Esophagus squamous epithelium (tissue), 5 donors: ENCODE measurements at regions of chr16 and their contacts with region 1.

Region 1: DNA sequence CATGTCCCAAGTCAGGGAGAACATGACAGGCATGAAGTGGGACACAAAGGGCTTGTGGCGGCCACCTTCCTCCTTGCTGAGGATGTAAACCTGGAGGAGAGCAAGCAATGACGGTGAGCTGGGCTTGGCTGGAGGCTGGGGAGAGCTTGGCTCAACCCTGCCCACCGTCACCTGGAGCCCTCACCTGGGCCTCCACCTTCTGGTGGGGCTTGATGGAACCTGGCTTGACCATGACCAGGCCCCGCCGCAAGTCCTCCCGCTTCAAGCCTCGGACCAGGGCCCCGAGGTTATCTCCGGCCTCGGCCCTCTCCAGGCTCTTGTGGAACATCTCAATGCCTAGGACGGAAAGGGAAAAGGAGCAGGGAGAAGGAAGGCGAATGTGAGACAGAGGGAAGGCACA is 2.4 kb downstream of the TUFM start:
- DNase-seq: no peak
- H3K4me3 ChIP-seq: no peak overlapping the region
- H3K27ac ChIP-seq: no peak overlapping the region
- H3K4me1 ChIP-seq: peaks cover 17 to 29% (median 20%) of the 10 kb centered on the region in 3 donors
- H3K27me3 ChIP-seq: no peaks in the 10 kb centered on the region
- CTCF ChIP-seq: no peak
- POLR2A ChIP-seq: no peak

Region 2: GRCh38 chr16:28873536-28874201 is 29.9 kb after region 1 on chr16:
- intact Hi-C with region 1: loop called (anchors 2 kb)
- DNase-seq: no peak
- H3K4me3 ChIP-seq: no peak overlapping the region
- H3K27ac ChIP-seq: no peak overlapping the region
- H3K4me1 ChIP-seq: peaks cover 0 to 2% (median 0%) of the 10 kb centered on the region in 3 donors
- H3K27me3 ChIP-seq: no peaks in the 10 kb centered on the region
- CTCF ChIP-seq: peak; percentile 52 to 76 (median 60)
- POLR2A ChIP-seq: no peak

Region 3: DNA sequence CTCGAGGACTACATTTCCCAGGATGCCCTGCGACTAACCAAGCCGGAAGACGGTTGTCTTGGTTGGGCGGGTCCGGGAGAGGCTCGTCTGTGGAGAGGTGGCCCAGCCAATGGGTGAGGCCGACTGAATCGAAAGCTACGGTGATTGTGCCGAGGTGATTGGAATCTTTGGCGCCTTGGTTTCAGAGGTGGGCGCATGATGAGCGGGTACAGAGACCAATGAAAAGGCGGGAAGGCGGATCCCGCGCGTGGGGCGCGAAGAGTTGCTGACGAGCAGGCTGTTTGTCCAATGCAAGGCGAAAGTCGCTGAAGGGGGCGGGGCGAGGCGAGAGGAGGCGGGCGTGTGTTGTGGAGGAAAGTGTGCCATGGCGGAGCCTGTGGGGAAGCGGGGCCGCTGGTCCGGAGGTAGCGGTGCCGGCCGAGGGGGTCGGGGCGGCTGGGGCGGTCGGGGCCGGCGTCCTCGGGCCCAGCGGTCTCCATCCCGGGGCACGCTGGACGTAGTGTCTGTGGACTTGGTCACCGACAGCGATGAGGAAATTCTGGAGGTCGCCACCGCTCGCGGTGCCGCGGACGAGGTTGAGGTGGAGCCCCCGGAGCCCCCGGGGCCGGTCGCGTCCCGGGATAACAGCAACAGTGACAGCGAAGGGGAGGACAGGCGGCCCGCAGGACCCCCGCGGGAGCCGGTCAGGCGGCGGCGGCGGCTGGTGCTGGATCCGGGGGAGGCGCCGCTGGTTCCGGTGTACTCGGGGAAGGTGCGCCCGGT is 107.1 kb after region 1 on chr16 and contains the start of gene NFATC2IP:
- intact Hi-C with region 1: no loop called
- DNase-seq: peak; percentile 97
- H3K4me3 ChIP-seq: peak within 1 kb of the TSS; percentile 85 to 97 (median 92)
- H3K27ac ChIP-seq: peak within 1 kb of the TSS; percentile 86 to 96 (median 92)
- H3K4me1 ChIP-seq: peaks cover 10 to 33% (median 16%) of the 10 kb centered on the region in 3 donors
- H3K27me3 ChIP-seq: no peaks in the 10 kb centered on the region
- CTCF ChIP-seq: peak in 1 of 6 experiments; percentile 28
- POLR2A ChIP-seq: peak in 1 of 4 donors; percentile 27
- total RNA-seq, gene NFATC2IP: 17.4 to 36.6 (median 24.2) TPM